Activated T-helper 2 cell treated with anti-CD3 and anti-CD28 coated beads, Interferon-gamma antibody, Interleukin-2, Interleukin-4, amounts not matched to agents 10 μg/mL and 5 μg/mL and 100 μg/mL, durations not matched to agents 14 hours and 24 hours and 36 hours (primary cell): ENCODE measurements at regions of chr6 and their contacts with region 1.

Region 1: GRCh38 chr6:83615025-83615999 is 93.6 kb downstream of the SNAP91 start:
- DNase-seq: no peak
- H3K4me3 Mint-ChIP-seq: no peak overlapping the region
- H3K27ac Mint-ChIP-seq: no peak overlapping the region
- H3K4me1 Mint-ChIP-seq: no peaks in the 10 kb centered on the region
- H3K27me3 Mint-ChIP-seq: no peaks in the 10 kb centered on the region

Region 2: GRCh38 chr6:83696674-83697073 is 81.4 kb after region 1 on chr6:
- intact Hi-C with region 1: no loop called
- DNase-seq: no peak
- H3K4me3 Mint-ChIP-seq: no peak overlapping the region
- H3K27ac Mint-ChIP-seq: no peak overlapping the region
- H3K4me1 Mint-ChIP-seq: no peaks in the 10 kb centered on the region
- H3K27me3 Mint-ChIP-seq: no peaks in the 10 kb centered on the region

Region 3: DNA sequence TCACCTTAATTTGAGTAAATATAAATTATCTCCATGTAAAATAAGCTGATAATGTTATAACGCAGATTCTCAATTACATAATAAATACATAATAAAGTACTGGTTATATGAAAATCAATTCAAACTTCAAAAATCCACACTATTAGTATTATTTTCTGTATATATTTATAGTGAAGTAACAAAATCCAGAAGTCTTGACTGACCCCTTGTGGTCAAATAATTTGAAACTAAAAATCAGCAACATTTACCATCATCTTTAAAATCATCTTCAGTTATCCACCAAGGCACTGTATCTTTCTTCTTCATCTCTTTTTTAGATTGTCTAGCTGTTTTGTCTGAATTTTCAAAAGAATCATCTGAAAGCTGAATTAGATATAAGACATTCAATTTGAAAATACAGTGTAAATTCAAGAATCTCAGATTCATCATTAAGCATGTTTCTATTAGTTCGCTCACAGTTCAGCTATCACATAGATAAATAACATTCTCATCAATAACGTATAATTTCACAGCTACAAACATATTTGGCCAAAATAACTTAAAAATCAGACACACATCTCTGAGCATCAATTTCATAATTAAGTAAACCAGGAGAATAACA is 605.6 kb after region 1 on chr6:
- intact Hi-C with region 1: loop called (anchors 2 kb)
- DNase-seq: no peak
- H3K4me3 Mint-ChIP-seq: no peak overlapping the region
- H3K27ac Mint-ChIP-seq: no peak overlapping the region
- H3K4me1 Mint-ChIP-seq: peaks cover 8% of the 10 kb centered on the region
- H3K27me3 Mint-ChIP-seq: no peaks in the 10 kb centered on the region